Breast epithelium (tissue), 4 donors: ENCODE measurements at regions of chr3 and their contacts with region 1.

Region 1: DNA sequence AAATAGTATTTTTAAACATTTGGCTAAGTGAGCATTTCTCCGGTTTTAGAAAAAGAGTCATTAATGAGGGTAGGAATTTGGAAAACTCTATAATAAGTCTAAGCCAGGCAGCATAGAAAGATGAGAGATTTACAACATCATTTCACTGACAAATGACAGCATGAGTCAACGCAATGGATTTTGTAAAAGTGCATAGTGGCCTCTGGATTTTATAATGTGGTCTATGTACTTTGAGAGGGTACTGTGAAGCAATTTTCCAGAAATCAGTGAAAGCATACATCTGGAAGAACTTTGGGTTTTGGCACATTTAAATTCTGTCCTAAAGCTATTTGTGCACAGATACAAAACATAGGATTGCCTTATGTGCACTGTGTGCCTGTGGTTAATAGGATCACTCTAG is 130.8 kb upstream of the CCNL1 start:
- DNase-seq: no peak
- H3K4me3 ChIP-seq: no peak overlapping the region
- H3K27ac ChIP-seq: no peak overlapping the region
- H3K4me1 ChIP-seq: no peaks in the 10 kb centered on the region
- H3K27me3 ChIP-seq: no peaks in the 10 kb centered on the region
- CTCF ChIP-seq: no peak
- POLR2A ChIP-seq: no peak

Region 2: DNA sequence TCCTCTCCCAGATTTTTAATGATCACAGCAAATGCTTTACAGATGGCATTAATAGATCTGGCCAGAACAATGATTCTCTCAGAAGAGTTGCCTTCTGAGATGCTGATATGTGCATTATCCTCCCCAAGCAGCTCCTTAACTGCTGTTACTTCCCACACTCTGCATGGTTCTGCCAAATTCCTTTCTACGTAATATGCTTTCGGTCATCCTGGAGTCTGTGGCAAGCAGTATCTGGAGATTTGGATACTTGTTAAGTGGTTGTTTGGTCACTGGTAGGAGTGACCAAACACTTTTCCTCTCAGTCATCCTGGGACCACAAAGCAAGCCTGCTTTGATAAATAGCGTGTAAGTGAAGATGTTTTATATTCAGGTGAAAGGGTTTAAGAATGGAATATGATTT is 59.7 kb before region 1 on chr3:
- intact Hi-C with region 1: no loop called
- DNase-seq: no peak
- H3K4me3 ChIP-seq: no peak overlapping the region
- H3K27ac ChIP-seq: no peak overlapping the region
- H3K4me1 ChIP-seq: no peaks in the 10 kb centered on the region
- H3K27me3 ChIP-seq: no peaks in the 10 kb centered on the region
- CTCF ChIP-seq: no peak
- POLR2A ChIP-seq: no peak

Region 3: DNA sequence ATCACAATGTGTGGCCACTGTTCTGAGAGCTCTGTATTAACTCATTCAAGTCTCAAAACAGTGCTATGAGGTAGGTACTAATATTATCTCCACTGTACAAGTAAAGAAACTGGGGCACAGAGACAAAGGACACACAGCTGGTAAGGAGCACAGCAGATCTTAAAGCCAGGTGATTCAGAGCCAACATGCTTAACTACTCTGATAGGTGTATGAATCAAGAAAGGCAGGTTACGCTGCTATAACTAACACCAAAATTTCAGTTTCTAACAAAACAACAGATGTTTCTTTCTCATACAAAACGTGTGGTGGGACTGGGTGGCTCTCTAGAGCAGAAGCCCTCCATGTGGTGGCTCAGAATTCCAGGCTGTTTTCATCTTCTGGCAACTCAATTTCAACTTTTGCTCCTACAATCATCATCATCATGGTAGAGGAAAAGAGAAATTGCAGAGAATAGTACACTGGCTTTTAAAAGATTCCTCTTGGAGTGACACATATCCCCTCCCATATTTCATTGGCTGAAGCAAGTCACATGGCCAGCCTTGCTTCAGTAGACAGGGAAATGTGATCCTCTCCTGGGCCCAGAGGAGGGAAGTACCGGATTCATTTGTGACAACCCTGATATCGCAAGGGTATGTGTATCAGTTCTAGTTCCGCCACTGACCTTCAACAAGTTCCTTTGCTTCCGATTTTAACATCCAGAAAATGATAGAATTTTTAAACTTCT is 19.7 kb after region 1 on chr3:
- intact Hi-C with region 1: no loop called
- DNase-seq: no peak
- H3K4me3 ChIP-seq: no peak overlapping the region
- H3K27ac ChIP-seq: no peak overlapping the region
- H3K4me1 ChIP-seq: no peaks in the 10 kb centered on the region
- H3K27me3 ChIP-seq: no peaks in the 10 kb centered on the region
- CTCF ChIP-seq: no peak
- POLR2A ChIP-seq: no peak

Region 4: DNA sequence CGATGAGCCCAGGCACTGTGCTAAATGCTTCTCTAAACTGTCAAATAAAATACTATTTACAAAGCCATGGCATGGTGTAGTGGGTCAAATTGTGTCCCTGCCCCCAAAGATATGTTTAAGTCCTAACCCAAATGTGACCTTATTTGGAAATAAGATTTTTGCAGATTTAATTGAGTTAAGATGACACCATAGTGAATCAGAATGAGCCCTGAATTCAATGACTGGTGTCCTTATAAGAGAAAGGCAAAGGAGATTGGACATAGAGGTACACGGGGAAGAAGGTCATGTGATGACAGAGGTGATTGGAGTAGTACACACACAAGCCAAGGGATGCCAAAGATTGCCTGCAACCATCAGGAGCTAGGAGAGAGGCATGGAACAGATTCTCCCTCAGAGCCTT is 334.0 kb after region 1 on chr3:
- intact Hi-C with region 1: loop called (anchors 5 kb)
- DNase-seq: no peak
- H3K4me3 ChIP-seq: no peak overlapping the region
- H3K27ac ChIP-seq: no peak overlapping the region
- H3K4me1 ChIP-seq: no peaks in the 10 kb centered on the region
- H3K27me3 ChIP-seq: no peaks in the 10 kb centered on the region
- CTCF ChIP-seq: no peak
- POLR2A ChIP-seq: no peak